ENCODE measurements at regions of chr3 and their contacts with region 1.

Region 1: GRCh38 chr3:50652709-50653108 is 22.0 kb upstream of the DOCK3 start:
- DNase-seq: peak; percentile 22 to 51 (median 45)
- H3K4me3 ChIP-seq: no peak overlapping the region
- H3K27ac ChIP-seq: no peak overlapping the region
- H3K4me1 ChIP-seq: peaks cover 0 to 2% (median 0%) of the 10 kb centered on the region in 4 experiments
- H3K27me3 ChIP-seq: no peaks in the 10 kb centered on the region

Region 2: GRCh38 chr3:50388016-50388719 is 264.5 kb before region 1 on chr3:
- CTCF ChIA-PET with region 1: no interaction called
- POLR2A ChIA-PET with region 1: no interaction called
- DNase-seq: peak in 2 of 3 donors; percentile 40 to 42
- H3K4me3 ChIP-seq: no peak overlapping the region
- H3K27ac ChIP-seq: no peak overlapping the region
- H3K4me1 ChIP-seq: peaks cover 0 to 12% (median 9%) of the 10 kb centered on the region in 4 experiments
- H3K27me3 ChIP-seq: peaks cover 0 to 2% (median 0%) of the 10 kb centered on the region in 5 experiments

Region 3: DNA sequence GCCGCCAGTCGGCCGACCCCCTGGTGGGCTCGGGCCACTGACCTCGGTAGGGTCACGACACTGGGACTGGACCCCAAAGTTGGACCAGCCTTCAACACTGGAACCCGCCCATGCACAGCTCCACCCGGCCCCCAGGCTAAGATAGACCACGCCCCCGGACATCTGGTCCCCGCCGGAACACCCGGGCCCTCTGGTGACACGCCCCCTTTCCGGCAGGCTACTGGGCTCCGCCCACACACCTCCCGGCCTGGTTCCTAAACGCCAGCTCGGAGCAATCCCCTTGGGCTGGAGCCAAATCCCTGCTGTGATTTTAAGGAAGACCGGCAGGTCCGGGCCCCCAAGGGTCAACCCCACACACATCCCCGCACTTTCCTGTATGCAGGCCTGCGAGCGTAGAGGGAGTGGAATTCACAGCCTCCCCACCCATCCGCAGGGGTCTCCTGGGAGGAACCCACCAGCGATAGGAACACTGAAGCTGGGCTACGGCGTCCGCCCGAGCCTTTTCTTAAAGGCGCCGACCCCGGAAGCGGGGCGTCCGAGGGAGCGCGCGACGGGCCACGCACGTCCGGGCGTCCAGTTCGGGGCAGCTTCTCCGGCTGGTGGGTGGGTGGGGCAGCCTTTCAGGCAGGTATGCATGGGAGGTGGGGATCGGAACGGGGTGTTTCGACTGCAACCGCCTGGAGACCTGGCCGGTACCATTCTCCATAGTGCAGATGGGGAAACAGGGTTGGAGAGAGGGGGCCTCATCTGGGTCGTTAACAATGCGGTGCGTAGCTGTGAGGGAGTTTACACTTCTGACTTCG is 83.6 kb before region 1 on chr3 and contains the start of gene HEMK1:
- CTCF ChIA-PET with region 1: interaction called, 11 read pairs
- POLR2A ChIA-PET with region 1: no interaction called
- DNase-seq: peak; percentile 92 to 93 (median 93)
- H3K4me3 ChIP-seq: peak within 1 kb of the TSS; percentile 69 to 98 (median 91)
- H3K27ac ChIP-seq: peak within 1 kb of the TSS; percentile 40 to 80
- H3K4me1 ChIP-seq: peaks cover 7 to 57% (median 47%) of the 10 kb centered on the region in 4 experiments
- H3K27me3 ChIP-seq: peaks cover 0 to 4% (median 0%) of the 10 kb centered on the region in 5 experiments

Region 4: GRCh38 chr3:50620420-50620819 is 32.3 kb before region 1 on chr3:
- CTCF ChIA-PET with region 1: interaction called, 101 read pairs
- POLR2A ChIA-PET with region 1: interaction called, 5 read pairs
- DNase-seq: peak in 2 of 3 donors; percentile 87 to 91
- H3K4me3 ChIP-seq: peak overlapping the region in 5 of 7 experiments; percentile 20 to 65 (median 63)
- H3K27ac ChIP-seq: peak overlapping the region; percentile 65 to 75
- H3K4me1 ChIP-seq: peaks cover 41 to 91% (median 87%) of the 10 kb centered on the region in 4 experiments
- H3K27me3 ChIP-seq: no peaks in the 10 kb centered on the region

Region 5: GRCh38 chr3:50627407-50628051 is 25.2 kb before region 1 on chr3:
- CTCF ChIA-PET with region 1: interaction called, 33 read pairs
- POLR2A ChIA-PET with region 1: interaction called, 3 read pairs
- DNase-seq: peak in 2 of 3 donors; percentile 64 to 78
- H3K4me3 ChIP-seq: peak overlapping the region in 2 of 7 experiments; percentile 5 to 29
- H3K27ac ChIP-seq: peak overlapping the region; percentile 22 to 69
- H3K4me1 ChIP-seq: peaks cover 32 to 100% (median 100%) of the 10 kb centered on the region in 4 experiments
- H3K27me3 ChIP-seq: no peaks in the 10 kb centered on the region

Region 6: GRCh38 chr3:50639055-50639494 is 13.6 kb before region 1 on chr3:
- CTCF ChIA-PET with region 1: interaction called, 15 read pairs
- POLR2A ChIA-PET with region 1: no interaction called
- DNase-seq: no peak
- H3K4me3 ChIP-seq: no peak overlapping the region
- H3K27ac ChIP-seq: no peak overlapping the region
- H3K4me1 ChIP-seq: peaks cover 0 to 43% (median 32%) of the 10 kb centered on the region in 4 experiments
- H3K27me3 ChIP-seq: no peaks in the 10 kb centered on the region

Region 7: DNA sequence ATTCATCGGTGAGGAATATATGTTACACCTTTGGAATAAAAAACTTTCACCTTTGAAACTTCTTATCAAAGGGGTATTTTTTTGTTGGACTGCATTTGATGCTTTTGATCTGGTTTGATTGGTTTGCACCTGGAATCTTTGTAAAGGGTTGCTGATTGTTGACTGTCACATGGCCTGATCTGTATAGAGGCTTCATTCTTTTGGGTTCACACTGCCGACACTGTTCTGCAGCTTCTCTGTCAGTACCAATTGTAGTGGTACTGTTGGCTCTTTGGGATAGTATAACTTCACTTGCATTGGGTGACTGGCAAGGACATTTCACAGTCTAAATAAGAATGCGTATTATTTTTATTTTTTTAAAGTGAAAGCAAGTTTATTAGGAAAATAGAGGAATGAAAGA is 177.7 kb after region 1 on chr3:
- CTCF ChIA-PET with region 1: no interaction called
- POLR2A ChIA-PET with region 1: no interaction called
- DNase-seq: no peak
- H3K4me3 ChIP-seq: no peak overlapping the region
- H3K27ac ChIP-seq: no peak overlapping the region
- H3K4me1 ChIP-seq: no peaks in the 10 kb centered on the region
- H3K27me3 ChIP-seq: no peaks in the 10 kb centered on the region